AG04449 (cell line): ENCODE measurements at regions of chr22 and their contacts with region 1.

Region 1: GRCh38 chr22:44712232-44712555 is 10.2 kb downstream of the PRR5 start:
- DNase-seq: no peak
- H3K4me3 ChIP-seq: no peak overlapping the region
- CTCF ChIP-seq: no peak

Region 2: GRCh38 chr22:44574065-44574464 is 138.1 kb before region 1 on chr22:
- CTCF ChIA-PET with region 1: no interaction called
- POLR2A ChIA-PET with region 1: no interaction called
- DNase-seq: peak; percentile 16
- H3K4me3 ChIP-seq: no peak overlapping the region
- CTCF ChIP-seq: no peak

Region 3: GRCh38 chr22:44586999-44587736 is 125.0 kb before region 1 on chr22:
- CTCF ChIA-PET with region 1: no interaction called
- POLR2A ChIA-PET with region 1: no interaction called
- DNase-seq: no peak
- H3K4me3 ChIP-seq: no peak overlapping the region
- CTCF ChIP-seq: no peak

Region 4: DNA sequence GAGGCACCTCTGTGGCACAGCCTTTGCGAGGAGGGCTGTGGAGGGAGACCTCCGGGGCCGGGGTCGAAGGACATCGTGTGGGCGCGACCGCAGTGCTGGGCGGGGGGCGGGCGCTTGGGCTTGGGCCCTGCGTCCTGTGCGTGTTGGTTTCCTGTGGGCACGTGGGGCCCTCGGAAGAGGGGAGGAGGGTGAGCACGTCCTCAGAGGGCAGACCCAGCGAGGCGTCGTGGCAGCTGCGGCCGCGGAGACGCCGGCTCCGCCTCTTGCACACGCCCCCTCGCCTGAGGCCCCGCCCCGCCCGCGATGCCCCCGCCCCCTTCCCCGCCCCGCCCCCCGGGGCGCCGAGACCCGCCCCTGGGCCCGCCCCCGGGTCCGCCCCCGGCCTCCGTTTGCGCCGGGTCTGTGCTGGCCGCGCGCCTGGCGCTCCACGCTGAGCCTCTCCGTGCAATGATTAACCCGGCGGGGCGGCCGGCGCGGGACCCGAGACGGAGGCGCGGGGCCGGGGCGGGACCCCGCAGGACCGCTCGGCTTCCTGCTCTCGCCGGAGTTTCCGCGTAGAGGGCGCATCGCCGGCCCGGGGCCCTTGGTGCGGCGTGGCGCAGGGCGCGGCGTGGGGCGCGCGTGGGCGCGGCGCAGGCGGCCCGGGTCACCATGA is 10.2 kb before region 1 on chr22 and contains the start of gene PRR5:
- CTCF ChIA-PET with region 1: interaction called, 10 read pairs
- POLR2A ChIA-PET with region 1: no interaction called
- DNase-seq: peak; percentile 63
- H3K4me3 ChIP-seq: peak within 1 kb of the TSS; percentile 65
- CTCF ChIP-seq: no peak

Region 5: GRCh38 chr22:44723801-44724200 is 11.6 kb after region 1 on chr22:
- CTCF ChIA-PET with region 1: interaction called, 10 read pairs
- POLR2A ChIA-PET with region 1: no interaction called
- DNase-seq: no peak
- H3K4me3 ChIP-seq: no peak overlapping the region
- CTCF ChIP-seq: no peak

Region 6: DNA sequence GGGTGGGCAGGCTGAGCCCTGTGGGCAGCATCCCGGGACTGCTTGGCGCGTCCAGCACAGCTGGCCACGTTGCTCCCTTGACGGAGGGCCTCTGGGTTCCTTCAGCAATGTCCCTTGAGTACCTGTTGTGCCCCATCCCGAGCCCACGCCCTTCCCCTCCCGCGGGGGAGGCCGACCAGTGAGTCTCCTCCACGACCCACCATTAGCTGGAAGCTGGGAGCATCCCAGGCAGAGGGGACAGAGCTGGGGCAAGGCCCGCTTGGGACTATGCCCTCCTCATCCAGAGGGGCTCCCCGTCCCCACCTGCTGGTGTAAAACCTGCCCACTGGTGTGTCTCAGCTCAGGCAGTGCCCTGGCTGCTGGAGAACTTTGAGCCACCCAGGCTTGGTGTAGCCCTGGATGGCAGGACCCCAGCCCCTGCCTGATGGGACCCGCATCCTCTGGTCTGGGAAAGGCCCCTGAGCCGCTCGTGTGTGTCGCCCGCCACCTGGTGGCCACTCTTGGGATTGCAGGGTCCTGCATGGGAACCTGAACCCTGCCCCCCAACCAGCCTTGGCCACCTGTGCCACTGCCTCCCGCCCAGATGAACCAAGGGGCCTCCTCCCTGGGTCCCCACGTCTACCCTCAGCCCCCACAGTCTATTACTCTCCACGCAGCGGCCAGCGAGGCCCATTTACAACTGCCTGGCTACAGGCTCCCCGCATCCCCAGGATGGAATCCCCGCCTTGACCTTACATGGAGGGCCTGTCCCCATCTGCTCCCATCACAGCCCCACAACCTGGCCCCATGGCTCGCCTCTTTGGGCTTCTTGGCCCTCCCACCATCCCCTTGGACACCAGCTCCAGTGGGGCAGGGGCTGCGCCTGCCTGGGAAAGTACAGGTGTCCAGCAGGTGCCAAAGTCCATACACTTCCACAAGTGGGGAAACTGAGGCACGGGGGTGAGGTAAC is 23.6 kb after region 1 on chr22:
- CTCF ChIA-PET with region 1: interaction called, 21 read pairs
- POLR2A ChIA-PET with region 1: no interaction called
- DNase-seq: no peak
- H3K4me3 ChIP-seq: no peak overlapping the region
- CTCF ChIP-seq: peak; percentile 96